Activated naive CD4-positive, alpha-beta T cell treated with anti-CD3 and anti-CD28 coated beads, Interleukin-2, amount 10 ng/mL, durations not matched to agents 7 days and 5 days (primary cell): ENCODE measurements at regions of chr2 and their contacts with region 1.

Region 1: GRCh38 chr2:113233593-113234550 is 44.8 kb downstream of the PAX8 start:
- DNase-seq: no peak
- H3K4me3 Mint-ChIP-seq: peak overlapping the region; percentile 35
- H3K27ac Mint-ChIP-seq: no peak overlapping the region
- H3K4me1 Mint-ChIP-seq: peaks cover 50% of the 10 kb centered on the region
- H3K27me3 Mint-ChIP-seq: peaks cover 14% of the 10 kb centered on the region

Region 2: DNA sequence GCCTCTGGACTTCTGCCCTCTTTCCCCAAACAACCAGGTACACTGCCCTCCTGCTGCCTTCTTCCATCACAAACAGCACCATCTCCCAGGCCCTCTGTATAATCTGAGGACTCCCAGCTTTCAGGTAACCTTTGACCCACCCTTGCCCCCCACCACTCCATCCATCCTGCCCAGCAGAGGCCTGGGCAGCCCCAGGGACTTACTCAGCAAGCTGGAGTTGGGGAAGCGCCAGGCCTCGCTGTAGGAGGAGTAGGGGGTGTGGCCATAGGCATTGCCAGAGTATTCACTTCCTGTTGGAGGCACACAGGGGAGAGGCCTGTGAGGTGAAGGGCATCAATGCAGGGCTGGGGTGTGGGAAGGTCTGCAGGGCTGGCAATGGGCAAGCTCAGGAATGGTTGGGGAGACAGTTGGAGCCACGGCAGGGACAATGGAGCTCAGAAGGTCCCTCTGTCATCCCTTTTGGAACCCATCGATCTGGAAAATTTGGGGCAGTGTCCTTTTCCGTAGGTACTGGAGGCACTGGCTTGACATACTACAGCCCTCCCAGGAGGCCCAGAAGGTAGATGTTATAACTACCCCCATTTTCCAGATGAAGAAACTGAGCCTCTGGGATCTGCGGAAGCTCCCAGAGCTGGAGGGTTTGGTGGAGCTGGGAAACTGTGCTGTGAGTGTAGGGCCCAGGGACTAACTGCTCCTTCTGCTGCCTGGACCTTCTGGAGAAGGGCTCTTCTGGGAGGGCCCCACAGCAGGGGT is 13.8 kb before region 1 on chr2:
- CTCF ChIA-PET with region 1: interaction called, 12 read pairs
- DNase-seq: no peak
- H3K4me3 Mint-ChIP-seq: no peak overlapping the region
- H3K27ac Mint-ChIP-seq: no peak overlapping the region
- H3K4me1 Mint-ChIP-seq: peaks cover 26% of the 10 kb centered on the region
- H3K27me3 Mint-ChIP-seq: peaks cover 31% of the 10 kb centered on the region

Region 3: DNA sequence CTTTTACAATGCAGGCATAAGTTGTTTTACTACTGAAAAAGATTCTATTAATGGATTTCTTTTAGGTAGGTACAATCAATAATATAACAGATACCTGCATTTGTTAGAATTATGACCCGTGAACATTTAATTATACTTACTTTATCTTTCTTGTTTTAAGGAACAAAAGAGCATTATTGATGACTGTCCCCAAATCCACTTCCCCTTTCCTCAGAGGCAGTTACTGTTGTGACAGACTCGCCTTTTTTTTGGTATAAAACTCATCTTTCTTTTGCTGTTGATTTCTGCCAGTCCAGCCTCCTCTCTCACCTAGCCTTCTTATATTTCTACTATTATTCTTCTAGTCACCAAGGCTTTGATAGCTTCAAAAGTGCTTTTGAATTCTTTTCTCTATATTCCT is 668.1 kb after region 1 on chr2:
- CTCF ChIA-PET with region 1: no interaction called
- DNase-seq: no peak
- H3K4me3 Mint-ChIP-seq: no peak overlapping the region
- H3K27ac Mint-ChIP-seq: no peak overlapping the region
- H3K4me1 Mint-ChIP-seq: peaks cover 90% of the 10 kb centered on the region
- H3K27me3 Mint-ChIP-seq: no peaks in the 10 kb centered on the region